HCT116 (cell line): ENCODE measurements at regions of chr13 and their contacts with region 1.

Region 1: GRCh38 chr13:79480954-79481684 is at the start of gene NDFIP2:
- DNase-seq: peak; percentile 90
- ATAC-seq: peak; percentile 97
- H3K4me3 ChIP-seq: peak within 1 kb of the TSS; percentile 64 to 95
- H3K27ac ChIP-seq: peak within 1 kb of the TSS; percentile 84
- H3K4me1 ChIP-seq: peaks cover 8 to 39% of the 10 kb centered on the region in 2 experiments
- H3K27me3 ChIP-seq: no peaks in the 10 kb centered on the region
- CTCF ChIP-seq: no peak
- POLR2A ChIP-seq: peak; percentile 64
- RAD21 ChIP-seq: no peak
- total RNA-seq, gene NDFIP2: 49.6 TPM

Region 2: GRCh38 chr13:79413521-79413920 is 67.6 kb before region 1 on chr13:
- CTCF ChIA-PET with region 1: no interaction called
- POLR2A ChIA-PET with region 1: no interaction called
- RAD21 ChIA-PET with region 1: no interaction called
- intact Hi-C with region 1: loop called (anchors 5 kb)
- DNase-seq: no peak
- ATAC-seq: no peak
- H3K4me3 ChIP-seq: no peak overlapping the region
- H3K27ac ChIP-seq: no peak overlapping the region
- H3K4me1 ChIP-seq: no peaks in the 10 kb centered on the region
- H3K27me3 ChIP-seq: no peaks in the 10 kb centered on the region
- CTCF ChIP-seq: no peak
- POLR2A ChIP-seq: no peak
- RAD21 ChIP-seq: no peak